ENCODE measurements at regions of chr1 and their contacts with region 1.

Region 1: DNA sequence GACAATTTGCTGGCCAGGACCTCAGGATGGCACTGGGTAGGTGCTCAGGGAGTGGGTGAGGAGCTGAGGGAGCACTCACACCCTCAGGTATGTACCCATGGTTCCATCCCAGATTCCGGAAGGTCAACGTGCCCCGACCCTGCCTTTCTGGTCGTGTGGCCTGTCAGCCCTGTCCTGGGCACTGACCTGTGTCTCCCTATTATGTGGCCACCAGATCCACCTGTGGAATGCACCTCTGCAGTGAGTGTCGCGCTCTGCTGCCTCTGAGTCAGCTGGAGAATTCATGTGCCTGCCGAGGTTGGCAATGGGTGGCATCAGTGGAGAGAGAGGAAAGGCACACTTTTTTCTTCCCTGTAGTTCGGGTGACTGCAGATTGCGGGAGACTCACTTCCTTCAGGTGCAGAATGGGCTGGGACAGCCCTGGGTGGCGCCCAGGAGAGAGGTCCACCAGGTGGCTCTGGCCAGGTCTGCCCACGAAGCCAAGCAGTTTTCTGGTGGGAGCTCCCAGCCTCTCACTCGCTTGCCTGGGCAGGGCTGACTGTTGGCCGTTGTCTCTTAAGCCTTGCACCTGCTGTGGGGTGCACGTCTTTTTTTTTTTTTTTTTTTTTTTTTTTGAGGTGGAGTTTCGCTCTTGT is 176.1 kb upstream of the TMEM51 start:
- DNase-seq: no peak

Region 2: GRCh38 chr1:15016526-15016925 is 39.1 kb after region 1 on chr1:
- intact Hi-C with region 1: loop called (anchors 5 kb)
- DNase-seq: no peak

Region 3: DNA sequence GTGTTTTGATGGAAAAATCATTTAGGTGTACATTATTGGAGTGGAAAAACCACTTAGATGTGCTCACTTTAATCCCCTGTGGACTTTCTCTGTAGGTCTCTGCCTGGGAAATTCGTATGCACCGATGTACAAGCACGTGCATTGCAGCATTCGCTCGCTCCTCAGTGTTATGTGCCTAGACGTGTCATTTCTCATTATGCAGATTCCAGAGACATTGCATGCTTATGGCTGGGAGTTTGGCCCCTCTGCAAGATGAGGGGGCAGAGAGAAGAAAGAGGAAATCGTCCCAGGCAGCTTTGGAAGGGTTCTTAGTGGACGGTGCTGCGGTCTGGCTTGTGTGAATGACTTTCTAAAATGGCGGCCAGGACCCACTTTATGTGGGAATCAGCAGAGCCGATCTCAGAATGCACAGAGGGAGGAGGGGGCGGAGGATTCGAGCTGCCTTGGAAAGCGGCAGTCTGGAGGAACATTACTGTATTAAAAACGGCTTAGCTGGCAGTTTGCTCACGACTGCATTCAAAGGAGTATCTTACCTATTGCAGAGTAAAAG is 872.4 kb after region 1 on chr1:
- intact Hi-C with region 1: no loop called
- DNase-seq: peak; percentile 45 to 92 (median 75)